ENCODE measurements at regions of chr19 and their contacts with region 1.

Region 1: DNA sequence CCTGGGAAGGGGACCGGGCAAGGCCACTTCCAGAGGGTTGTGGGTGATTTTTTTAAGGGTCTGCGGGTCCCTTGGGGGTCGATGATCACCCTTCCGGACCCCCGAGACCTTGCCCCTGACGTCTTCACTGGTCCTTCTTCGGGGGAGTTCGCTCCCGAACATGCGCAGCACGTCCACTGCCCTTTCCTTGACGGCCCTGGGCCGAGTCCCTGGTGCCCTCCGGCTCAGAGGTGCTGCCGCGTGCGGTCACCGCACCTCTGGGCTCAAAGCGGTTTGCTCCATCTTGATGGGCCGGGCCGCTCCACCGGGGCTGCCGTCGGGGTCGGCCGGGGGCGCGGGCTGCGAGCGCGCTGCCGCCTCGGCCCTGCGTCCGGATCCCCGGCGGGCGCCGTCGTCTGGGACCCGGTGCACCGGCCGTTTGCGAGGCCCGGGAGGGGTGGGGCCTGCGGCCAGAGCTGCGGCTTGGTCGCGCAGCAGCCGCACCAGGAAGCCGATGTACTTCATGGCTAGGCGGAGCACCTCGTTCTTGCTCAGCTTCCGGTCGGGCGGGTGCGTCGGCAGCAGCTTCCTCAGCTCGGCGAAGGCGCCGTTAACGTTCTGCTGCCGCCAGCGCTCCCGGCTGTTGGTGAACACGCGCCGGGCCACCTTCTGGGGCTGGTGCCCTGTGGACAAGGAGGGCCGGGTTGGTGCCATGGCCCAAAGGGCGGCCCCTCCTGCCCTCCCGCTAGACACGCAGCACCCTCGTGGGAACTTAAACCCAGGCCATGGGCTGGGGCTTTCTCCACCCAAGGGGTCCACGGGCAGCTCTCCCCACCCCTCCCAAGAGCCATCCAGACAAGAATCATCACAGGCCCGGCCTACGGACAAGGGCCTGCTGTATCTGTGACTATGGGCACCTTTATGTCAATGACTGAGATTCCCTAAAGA is 3.3 kb downstream of the LYL1 start:
- DNase-seq: peak; percentile 76
- H3K4me3 Mint-ChIP-seq: peak overlapping the region; percentile 76
- H3K27ac Mint-ChIP-seq: peak overlapping the region; percentile 95
- H3K4me1 Mint-ChIP-seq: peaks cover 21% of the 10 kb centered on the region
- H3K27me3 Mint-ChIP-seq: peaks cover 19% of the 10 kb centered on the region

Region 2: DNA sequence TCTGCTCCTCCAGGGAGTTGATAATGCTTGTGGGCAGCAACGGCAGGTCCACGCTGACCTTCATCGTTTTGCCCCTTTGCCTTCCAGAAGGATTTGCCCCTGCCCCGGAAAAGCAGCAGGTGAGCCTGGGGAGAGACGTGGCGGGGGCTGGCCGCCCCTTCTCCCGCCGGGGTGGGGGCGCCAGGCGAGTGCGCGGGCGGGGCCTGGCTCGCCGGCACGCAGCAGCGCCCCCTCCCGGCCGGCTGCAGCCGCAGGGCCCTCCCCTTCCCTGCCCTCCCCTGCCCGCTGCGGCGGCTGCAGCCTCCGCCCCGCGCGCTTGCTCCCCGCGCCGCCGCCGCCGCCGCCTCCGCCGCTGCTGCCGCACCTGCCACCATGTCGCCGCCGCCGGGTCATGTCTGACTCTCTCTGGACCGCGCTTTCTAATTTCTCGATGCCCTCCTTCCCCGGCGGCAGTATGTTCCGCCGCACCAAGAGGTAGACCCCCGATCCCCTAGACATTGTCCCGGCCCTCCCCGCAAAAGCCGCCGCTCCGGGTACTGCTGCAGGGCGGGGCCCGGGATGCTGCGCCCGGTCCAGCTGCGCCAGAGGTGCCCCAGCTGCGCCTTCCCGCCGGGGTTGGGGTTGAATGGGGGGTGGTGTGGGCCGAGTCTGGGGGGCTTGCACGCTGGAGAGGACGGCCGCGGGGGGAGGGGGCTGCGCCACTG is 261.0 kb before region 1 on chr19 and contains the start of gene MAST1:
- intact Hi-C with region 1: loop called (anchors 5 kb)
- DNase-seq: peak; percentile 47
- H3K4me3 Mint-ChIP-seq: peak within 1 kb of the TSS; percentile 68
- H3K27ac Mint-ChIP-seq: no peak within 1 kb of the TSS
- H3K4me1 Mint-ChIP-seq: peaks cover 30% of the 10 kb centered on the region
- H3K27me3 Mint-ChIP-seq: peaks cover 59% of the 10 kb centered on the region
- total RNA-seq, gene MAST1: 1.4 and 1.7 TPM in 2 replicates

Region 3: GRCh38 chr19:13012690-13013608 is 86.4 kb before region 1 on chr19:
- intact Hi-C with region 1: loop called (anchors 1 kb)
- DNase-seq: no peak
- H3K4me3 Mint-ChIP-seq: peak overlapping the region; percentile 79
- H3K27ac Mint-ChIP-seq: peak overlapping the region; percentile 85
- H3K4me1 Mint-ChIP-seq: peaks cover 23% of the 10 kb centered on the region
- H3K27me3 Mint-ChIP-seq: peaks cover 72% of the 10 kb centered on the region

Region 4: GRCh38 chr19:13132471-13133180 is 33.3 kb after region 1 on chr19:
- intact Hi-C with region 1: loop called (anchors 1 kb)
- DNase-seq: peak; percentile 46
- H3K4me3 Mint-ChIP-seq: peak overlapping the region; percentile 77
- H3K27ac Mint-ChIP-seq: peak overlapping the region; percentile 90
- H3K4me1 Mint-ChIP-seq: peaks cover 41% of the 10 kb centered on the region
- H3K27me3 Mint-ChIP-seq: no peaks in the 10 kb centered on the region

Measured in activated T-helper 1 cell treated with anti-CD3 and anti-CD28 coated beads, Interleukin-12 subunit alpha, Interleukin-12 subunit beta, Interleukin-2, Interleukin-4 antibody, amounts not matched to agents 30 ng/mL and 10 ng/mL and 1 ng/mL, durations not matched to agents 14 hours and 24 hours and 36 hours (primary cell).